Caco-2 (cell line): ENCODE measurements at regions of chr11 and their contacts with region 1.

Region 1: DNA sequence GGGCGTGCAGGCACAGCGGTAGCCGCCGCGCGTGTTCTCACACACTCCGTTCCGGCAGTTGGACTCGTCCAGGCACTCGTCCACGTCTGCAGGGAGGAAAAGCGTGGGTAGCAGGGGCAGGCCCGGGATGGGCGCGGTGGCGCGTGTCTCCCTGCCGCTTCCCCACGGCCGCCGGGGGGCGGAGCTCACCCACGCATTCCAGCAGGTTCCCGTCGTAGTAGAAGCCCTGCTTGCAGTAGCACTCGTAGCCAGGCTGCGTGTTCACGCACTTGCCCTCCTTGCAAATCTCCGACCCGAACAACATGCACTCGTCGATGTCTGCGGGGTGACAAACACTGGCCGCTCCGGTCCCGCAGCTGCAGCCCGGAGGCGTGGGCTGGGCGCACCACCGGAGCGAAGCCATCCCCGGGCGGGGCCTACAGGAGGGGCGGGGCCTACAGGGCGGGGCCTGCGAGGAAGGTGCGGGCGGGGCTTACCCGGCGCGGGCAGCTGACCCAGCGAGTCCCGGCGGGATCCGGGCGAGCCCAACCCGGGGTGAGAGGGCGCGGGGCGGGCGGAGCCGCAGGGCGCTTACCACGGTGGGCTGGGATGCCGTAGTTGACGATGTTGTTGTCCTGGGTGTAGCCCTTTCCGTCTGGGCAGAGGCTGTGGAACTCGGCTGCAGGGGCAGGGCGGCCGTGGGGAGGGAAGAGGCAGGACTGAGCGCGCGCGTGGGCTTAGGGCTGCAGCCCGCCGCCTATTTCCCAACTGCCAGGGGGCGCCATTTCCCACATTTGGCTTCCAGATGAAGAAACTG is 15.6 kb downstream of the SCYL1 start:
- DNase-seq: peak; percentile 71 to 74
- H3K4me3 ChIP-seq: peak overlapping the region; percentile 21
- H3K4me3 Mint-ChIP-seq: peak overlapping the region; percentile 63
- H3K27ac Mint-ChIP-seq: peak overlapping the region; percentile 46
- H3K4me1 ChIP-seq: peaks cover 14% of the 10 kb centered on the region
- H3K4me1 Mint-ChIP-seq: peaks cover 33% of the 10 kb centered on the region
- H3K27me3 ChIP-seq: no peaks in the 10 kb centered on the region
- H3K27me3 Mint-ChIP-seq: no peaks in the 10 kb centered on the region
- CTCF ChIP-seq: peak; percentile 64

Region 2: GRCh38 chr11:65150509-65151271 is 389.8 kb before region 1 on chr11:
- CTCF ChIA-PET with region 1: no interaction called
- POLR2A ChIA-PET with region 1: no interaction called
- intact Hi-C with region 1: no loop called
- DNase-seq: no peak
- H3K4me3 ChIP-seq: no peak overlapping the region
- H3K4me3 Mint-ChIP-seq: no peak overlapping the region
- H3K27ac Mint-ChIP-seq: no peak overlapping the region
- H3K4me1 ChIP-seq: no peaks in the 10 kb centered on the region
- H3K4me1 Mint-ChIP-seq: peaks cover 6% of the 10 kb centered on the region
- H3K27me3 ChIP-seq: no peaks in the 10 kb centered on the region; the same call in none of the 2 replicates
- H3K27me3 Mint-ChIP-seq: no peaks in the 10 kb centered on the region
- CTCF ChIP-seq: no peak

Region 3: DNA sequence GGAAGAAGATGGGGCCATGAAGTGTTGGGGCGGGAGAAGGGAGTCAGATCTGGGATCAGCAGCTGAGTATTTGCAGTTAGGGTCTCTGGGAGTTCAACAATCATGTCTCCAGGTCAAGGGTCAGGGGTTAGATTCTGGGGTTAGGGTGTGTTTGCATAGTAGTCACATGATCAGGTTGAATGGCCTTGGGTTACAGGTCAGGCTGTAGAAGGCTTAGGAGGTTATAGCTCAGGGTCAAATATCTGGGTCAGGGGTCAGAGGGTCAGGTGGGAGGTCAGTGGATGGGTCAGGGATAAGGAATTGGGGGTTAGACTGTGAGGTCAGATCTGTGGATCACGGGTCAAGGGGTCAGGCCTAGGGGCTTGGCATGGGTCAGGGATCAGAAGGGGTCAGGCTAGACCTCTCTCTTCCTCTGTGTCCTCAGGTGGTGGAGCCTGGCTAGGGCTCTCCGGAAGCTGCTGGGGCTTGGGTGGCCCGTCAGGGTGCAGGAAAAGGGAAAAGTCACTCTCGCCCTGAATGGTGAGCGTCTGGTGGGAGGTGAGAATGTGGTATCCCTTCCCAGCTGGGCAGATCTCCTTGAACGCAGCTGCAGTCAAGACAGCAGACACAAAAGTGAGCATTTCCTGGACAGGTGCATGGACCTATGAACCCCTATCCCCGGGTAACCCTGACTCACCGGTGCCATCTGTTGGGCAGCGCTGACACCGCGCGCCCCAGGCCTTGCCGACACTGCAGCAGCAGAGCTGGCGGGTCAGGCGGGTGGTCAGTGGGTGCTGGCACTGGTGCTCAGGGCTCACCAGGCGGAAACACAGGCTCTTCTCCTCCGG is 11.3 kb after region 1 on chr11:
- CTCF ChIA-PET with region 1: interaction called, 18 read pairs
- POLR2A ChIA-PET with region 1: no interaction called
- intact Hi-C with region 1: loop called (anchors 1 kb)
- DNase-seq: peak; percentile 88 to 94
- H3K4me3 ChIP-seq: no peak overlapping the region
- H3K4me3 Mint-ChIP-seq: peak overlapping the region; percentile 36
- H3K27ac Mint-ChIP-seq: peak overlapping the region; percentile 62
- H3K4me1 ChIP-seq: peaks cover 44% of the 10 kb centered on the region
- H3K4me1 Mint-ChIP-seq: peaks cover 44% of the 10 kb centered on the region
- H3K27me3 ChIP-seq: no peaks in the 10 kb centered on the region
- H3K27me3 Mint-ChIP-seq: no peaks in the 10 kb centered on the region
- CTCF ChIP-seq: peak; percentile 78 to 90

Region 4: GRCh38 chr11:65911682-65912568 is 371.4 kb after region 1 on chr11:
- CTCF ChIA-PET with region 1: no interaction called
- POLR2A ChIA-PET with region 1: no interaction called
- intact Hi-C with region 1: no loop called
- DNase-seq: peak; percentile 65 to 73
- H3K4me3 ChIP-seq: no peak overlapping the region
- H3K4me3 Mint-ChIP-seq: peak overlapping the region; percentile 28
- H3K27ac Mint-ChIP-seq: no peak overlapping the region
- H3K4me1 ChIP-seq: peaks cover 8% of the 10 kb centered on the region
- H3K4me1 Mint-ChIP-seq: peaks cover 6% of the 10 kb centered on the region
- H3K27me3 ChIP-seq: no peaks in the 10 kb centered on the region
- H3K27me3 Mint-ChIP-seq: no peaks in the 10 kb centered on the region
- CTCF ChIP-seq: peak; percentile 46 to 77